ENCODE measurements at regions of chr6 and their contacts with region 1.

Region 1: DNA sequence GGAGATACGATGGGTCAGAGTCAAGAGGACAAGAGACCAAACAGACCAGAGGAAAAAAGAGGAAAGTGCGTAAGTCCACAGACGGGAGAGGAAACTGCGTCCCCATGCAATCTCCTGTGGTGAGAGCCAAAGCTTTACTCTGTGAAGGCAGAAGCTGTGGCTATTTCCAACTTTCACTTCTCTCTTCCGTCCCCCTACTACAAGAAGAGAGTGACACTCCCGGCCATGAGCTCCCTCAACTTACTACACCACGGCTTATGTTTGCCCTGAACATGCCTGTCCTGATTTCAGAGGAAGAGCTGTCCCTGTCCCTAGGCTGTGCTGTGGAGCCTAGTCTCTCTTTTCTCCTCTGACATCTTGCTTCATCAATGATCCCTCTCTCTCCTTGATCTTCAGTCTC is 11.5 kb upstream of the SSR1 start:
- DNase-seq: no peak
- ATAC-seq: no peak; the same call in 1 of the 2 replicates
- H3K4me3 ChIP-seq: no peak overlapping the region
- H3K27ac ChIP-seq: no peak overlapping the region
- H3K4me1 ChIP-seq: no peaks in the 10 kb centered on the region
- H3K27me3 ChIP-seq: peaks cover 2% of the 10 kb centered on the region; the same call in 1 of the 2 replicates
- CTCF ChIP-seq: no peak

Region 2: GRCh38 chr6:7311176-7311575 is 13.3 kb before region 1 on chr6:
- CTCF ChIA-PET with region 1: interaction called, 9 read pairs
- POLR2A ChIA-PET with region 1: interaction called, 10 read pairs
- in situ Hi-C with region 1: no loop called
- intact Hi-C with region 1: no loop called
- DNase-seq: no peak
- ATAC-seq: no peak
- H3K4me3 ChIP-seq: peak overlapping the region; percentile 86 to 95; a peak in 2 of 4 replicates
- H3K27ac ChIP-seq: 0 out of 2 replicates have a peak overlapping the region, but pooled peaks have one; percentile 58
- H3K4me1 ChIP-seq: peaks cover 3% of the 10 kb centered on the region; the same call in 1 of the 2 replicates
- H3K27me3 ChIP-seq: no peaks in the 10 kb centered on the region
- CTCF ChIP-seq: no peak